Body of pancreas (tissue), 4 donors: ENCODE measurements at regions of chr1 and their contacts with region 1.

Region 1: DNA sequence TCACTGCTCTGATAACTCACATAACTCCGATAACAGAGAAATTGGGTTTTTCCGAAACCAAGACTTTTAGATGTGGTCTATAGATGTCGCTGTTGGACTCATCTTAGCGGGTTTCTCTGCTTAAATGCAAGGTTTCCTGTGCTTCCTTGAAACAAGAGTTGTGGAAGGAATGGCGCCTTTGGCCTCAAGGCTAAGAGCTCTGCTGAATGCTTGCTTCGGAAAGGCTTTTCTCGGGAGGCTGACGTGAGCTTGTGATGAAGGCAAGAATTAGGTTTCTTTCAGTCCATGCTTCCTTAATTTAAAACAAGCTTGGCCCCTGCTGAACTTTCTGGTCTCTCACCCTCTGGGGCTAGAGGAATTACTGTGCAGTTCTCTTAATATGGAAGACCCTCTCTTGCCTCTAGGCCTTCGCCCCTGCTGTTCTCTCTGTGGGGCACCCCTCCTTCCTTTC is 113.5 kb downstream of the MAP3K21 start:
- DNase-seq: peak; percentile 19 to 52 (median 30)
- ATAC-seq: peak; percentile 68
- H3K4me3 ChIP-seq: no peak overlapping the region
- H3K27ac ChIP-seq: no peak overlapping the region
- H3K4me1 ChIP-seq: peaks cover 5% of the 10 kb centered on the region
- H3K27me3 ChIP-seq: peaks cover 0 to 4% of the 10 kb centered on the region in 2 donors
- CTCF ChIP-seq: peak; percentile 44 to 86 (median 77)
- POLR2A ChIP-seq: no peak

Region 2: GRCh38 chr1:233796146-233796783 is 355.3 kb after region 1 on chr1:
- intact Hi-C with region 1: loop called (anchors 5 kb)
- DNase-seq: no peak
- ATAC-seq: no peak
- H3K4me3 ChIP-seq: no peak overlapping the region
- H3K27ac ChIP-seq: no peak overlapping the region
- H3K4me1 ChIP-seq: no peaks in the 10 kb centered on the region
- H3K27me3 ChIP-seq: no peaks in the 10 kb centered on the region
- CTCF ChIP-seq: no peak
- POLR2A ChIP-seq: no peak